Naive thymus-derived CD4-positive, alpha-beta T cell (primary cell): ENCODE measurements at regions of chr2 and their contacts with region 1.

Region 1: DNA sequence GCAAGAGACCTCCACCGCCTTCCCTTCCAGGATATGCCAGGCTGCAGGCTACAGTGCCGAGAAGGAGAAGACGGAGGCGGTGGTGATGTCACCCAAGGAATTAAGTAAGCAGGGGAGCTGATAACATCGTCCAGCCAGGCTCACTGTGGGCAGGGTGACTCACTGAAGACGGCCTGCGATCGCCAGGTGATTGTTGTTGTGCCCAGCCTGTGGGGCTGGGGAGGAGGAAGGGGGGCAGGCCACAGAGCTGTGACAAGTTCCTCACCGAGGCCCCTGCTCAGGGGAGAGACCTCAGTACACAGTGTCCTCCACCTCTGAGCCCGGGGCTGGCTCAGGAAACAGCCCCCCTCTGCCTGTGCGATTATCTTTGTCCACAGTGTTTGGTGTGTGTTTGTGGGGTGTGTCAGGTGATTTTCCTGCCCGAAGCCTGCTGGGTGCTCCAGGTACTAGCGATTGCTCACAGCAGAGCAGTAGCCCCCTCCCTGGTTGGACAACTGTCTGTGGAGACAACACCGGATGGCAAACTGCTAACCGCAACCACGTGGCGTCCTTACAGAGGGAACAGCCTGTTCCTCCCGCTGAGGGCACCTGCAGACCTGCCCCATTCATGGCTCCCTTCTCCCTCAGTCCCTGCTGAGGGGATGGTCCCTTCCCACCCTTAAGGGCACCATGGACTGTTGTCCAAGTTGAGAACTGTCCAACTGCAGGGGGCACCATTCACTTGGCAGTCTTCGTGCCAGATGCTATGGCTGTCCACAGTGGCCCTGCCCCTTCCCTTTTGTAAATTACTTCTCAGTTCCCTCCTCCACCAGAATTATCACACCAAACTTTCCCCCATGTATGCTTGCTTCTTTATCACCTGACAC is 95.1 kb downstream of the ZFP36L2 start:
- DNase-seq: peak; percentile 44 to 92 (median 82)
- ATAC-seq: peak; percentile 60
- H3K4me3 ChIP-seq: peak overlapping the region; percentile 51
- H3K4me3 Mint-ChIP-seq: peak overlapping the region; percentile 36 to 86 (median 68)
- H3K27ac ChIP-seq: peak overlapping the region; percentile 96
- H3K27ac Mint-ChIP-seq: peak overlapping the region; percentile 88 to 100 (median 98)
- H3K4me1 ChIP-seq: peaks cover 90 to 92% of the 10 kb centered on the region in 2 donors
- H3K4me1 Mint-ChIP-seq: peaks cover 67 to 89% (median 85%) of the 10 kb centered on the region in 7 donors
- H3K27me3 ChIP-seq: no peaks in the 10 kb centered on the region
- H3K27me3 Mint-ChIP-seq: no peaks in the 10 kb centered on the region

Region 2: GRCh38 chr2:41180387-41180786 is 1950.9 kb before region 1 on chr2:
- CTCF ChIA-PET with region 1: no interaction called
- POLR2A ChIA-PET with region 1: no interaction called
- intact Hi-C with region 1: no loop called
- DNase-seq: no peak
- ATAC-seq: no peak
- H3K4me3 ChIP-seq: no peak overlapping the region
- H3K4me3 Mint-ChIP-seq: no peak overlapping the region
- H3K27ac ChIP-seq: no peak overlapping the region
- H3K27ac Mint-ChIP-seq: no peak overlapping the region
- H3K4me1 ChIP-seq: no peaks in the 10 kb centered on the region
- H3K4me1 Mint-ChIP-seq: no peaks in the 10 kb centered on the region
- H3K27me3 ChIP-seq: no peaks in the 10 kb centered on the region
- H3K27me3 Mint-ChIP-seq: no peaks in the 10 kb centered on the region

Region 3: GRCh38 chr2:42906557-42907411 is 224.5 kb before region 1 on chr2:
- CTCF ChIA-PET with region 1: no interaction called
- POLR2A ChIA-PET with region 1: no interaction called
- intact Hi-C with region 1: no loop called
- DNase-seq: no peak
- ATAC-seq: peak; percentile 31
- H3K4me3 ChIP-seq: no peak overlapping the region
- H3K4me3 Mint-ChIP-seq: no peak overlapping the region
- H3K27ac ChIP-seq: no peak overlapping the region
- H3K27ac Mint-ChIP-seq: peak overlapping the region in 1 of 9 donors; percentile 55
- H3K4me1 ChIP-seq: no peaks in the 10 kb centered on the region
- H3K4me1 Mint-ChIP-seq: peaks cover 0 to 5% (median 0%) of the 10 kb centered on the region in 7 donors
- H3K27me3 ChIP-seq: no peaks in the 10 kb centered on the region
- H3K27me3 Mint-ChIP-seq: peaks cover 7 to 26% (median 16%) of the 10 kb centered on the region in 5 donors

Region 4: GRCh38 chr2:42944779-42945415 is 186.4 kb before region 1 on chr2:
- CTCF ChIA-PET with region 1: interaction called, 4 read pairs
- POLR2A ChIA-PET with region 1: interaction called, 4 read pairs
- intact Hi-C with region 1: loop called in 1 of 2 experiments (anchors 5 kb)
- DNase-seq: no peak
- ATAC-seq: no peak
- H3K4me3 ChIP-seq: no peak overlapping the region
- H3K4me3 Mint-ChIP-seq: no peak overlapping the region
- H3K27ac ChIP-seq: no peak overlapping the region
- H3K27ac Mint-ChIP-seq: no peak overlapping the region
- H3K4me1 ChIP-seq: no peaks in the 10 kb centered on the region
- H3K4me1 Mint-ChIP-seq: peaks cover 0 to 7% (median 5%) of the 10 kb centered on the region in 7 donors
- H3K27me3 ChIP-seq: no peaks in the 10 kb centered on the region
- H3K27me3 Mint-ChIP-seq: peaks cover 0 to 8% (median 0%) of the 10 kb centered on the region in 5 donors

Region 5: DNA sequence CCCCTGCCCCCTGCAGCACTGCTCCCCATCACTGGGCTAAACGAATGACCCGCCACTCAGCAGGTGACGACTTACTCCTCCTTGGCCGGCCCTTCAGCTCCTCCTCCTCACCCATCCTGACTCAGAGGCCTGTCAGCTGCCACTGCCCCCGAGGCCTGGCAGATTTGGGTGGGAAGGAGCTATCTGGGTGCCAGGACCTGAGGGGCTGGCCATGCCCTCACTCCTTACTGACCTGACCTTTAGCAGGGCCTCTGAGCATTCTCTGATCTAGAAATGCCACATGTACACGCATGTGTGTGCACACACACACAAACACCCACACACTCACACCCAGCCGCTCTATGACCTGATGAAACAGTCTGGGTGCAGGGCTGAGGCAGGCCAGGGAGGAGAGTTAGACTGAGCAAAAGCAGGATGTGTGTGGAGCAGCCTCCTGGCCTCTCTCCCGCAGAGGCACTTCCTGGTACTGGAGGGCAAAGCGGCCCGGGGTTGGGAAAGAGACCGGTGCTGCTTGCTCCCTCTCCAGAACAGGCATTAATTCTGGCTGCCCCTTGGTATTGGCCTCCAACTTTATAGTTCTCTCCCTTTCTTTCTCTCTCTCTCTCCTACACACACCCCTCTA is 27.1 kb after region 1 on chr2:
- CTCF ChIA-PET with region 1: interaction called, 6 read pairs
- POLR2A ChIA-PET with region 1: interaction called, 1,274 read pairs
- intact Hi-C with region 1: no loop called
- DNase-seq: peak in 3 of 9 donors; percentile 70 to 72 (median 71)
- ATAC-seq: peak; percentile 59
- H3K4me3 ChIP-seq: peak overlapping the region; percentile 18
- H3K4me3 Mint-ChIP-seq: peak overlapping the region; percentile 81 to 91 (median 86)
- H3K27ac ChIP-seq: peak overlapping the region; percentile 92
- H3K27ac Mint-ChIP-seq: peak overlapping the region; percentile 96 to 100 (median 99)
- H3K4me1 ChIP-seq: peaks cover 53 to 62% of the 10 kb centered on the region in 2 donors
- H3K4me1 Mint-ChIP-seq: peaks cover 47 to 95% (median 69%) of the 10 kb centered on the region in 7 donors
- H3K27me3 ChIP-seq: no peaks in the 10 kb centered on the region
- H3K27me3 Mint-ChIP-seq: no peaks in the 10 kb centered on the region

Region 6: GRCh38 chr2:43194121-43194869 is 63.0 kb after region 1 on chr2:
- CTCF ChIA-PET with region 1: interaction called, 11 read pairs
- POLR2A ChIA-PET with region 1: interaction called, 120 read pairs
- intact Hi-C with region 1: loop called in 1 of 2 experiments (anchors 1 kb)
- DNase-seq: no peak
- ATAC-seq: no peak
- H3K4me3 ChIP-seq: peak overlapping the region; percentile 80
- H3K4me3 Mint-ChIP-seq: peak overlapping the region; percentile 86 to 100 (median 92)
- H3K27ac ChIP-seq: peak overlapping the region; percentile 98
- H3K27ac Mint-ChIP-seq: peak overlapping the region; percentile 94 to 100 (median 99)
- H3K4me1 ChIP-seq: peaks cover 61 to 69% of the 10 kb centered on the region in 2 donors
- H3K4me1 Mint-ChIP-seq: peaks cover 37 to 75% (median 59%) of the 10 kb centered on the region in 7 donors
- H3K27me3 ChIP-seq: no peaks in the 10 kb centered on the region
- H3K27me3 Mint-ChIP-seq: no peaks in the 10 kb centered on the region

Region 7: DNA sequence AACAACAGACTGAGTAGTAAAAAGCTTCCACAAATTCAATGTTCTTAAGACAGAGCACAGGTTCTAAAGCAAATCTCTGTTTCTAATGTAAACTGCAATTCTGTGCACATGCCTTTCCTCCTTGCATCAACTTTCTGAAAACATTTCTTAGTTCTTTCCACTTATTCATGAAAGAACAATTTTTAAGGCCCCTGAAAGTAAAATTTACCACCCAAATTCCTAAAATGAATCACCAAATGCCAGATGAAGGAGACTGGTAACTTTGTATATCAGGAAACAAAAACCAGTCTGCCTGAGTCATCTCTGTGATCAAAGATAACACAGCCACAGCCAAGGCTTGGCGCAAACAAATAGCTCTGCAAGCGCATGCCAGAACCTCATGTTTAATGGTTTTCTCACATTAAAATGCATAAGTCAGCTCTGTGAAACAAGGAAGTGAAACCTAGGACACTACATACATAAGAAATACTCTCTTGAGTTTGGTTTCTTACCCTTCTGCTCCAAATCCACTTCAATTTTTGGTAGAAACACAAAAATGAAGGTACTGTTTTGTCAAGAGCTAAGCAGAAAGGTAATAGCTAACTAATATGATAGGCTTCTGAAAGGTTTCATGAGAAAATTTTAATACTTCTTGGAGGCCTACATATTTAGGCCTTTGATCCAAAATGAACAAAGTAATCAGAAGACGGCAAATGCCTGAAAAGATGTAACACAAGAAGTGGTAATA is 295.2 kb after region 1 on chr2:
- CTCF ChIA-PET with region 1: no interaction called
- POLR2A ChIA-PET with region 1: no interaction called
- intact Hi-C with region 1: loop called in 1 of 2 experiments (anchors 2 kb)
- DNase-seq: peak in 5 of 9 donors; percentile 4 to 56 (median 17)
- ATAC-seq: peak; percentile 94
- H3K4me3 ChIP-seq: no peak overlapping the region
- H3K4me3 Mint-ChIP-seq: peak overlapping the region in 4 of 10 donors; percentile 3 to 66 (median 5)
- H3K27ac ChIP-seq: no peak overlapping the region
- H3K27ac Mint-ChIP-seq: peak overlapping the region in 5 of 9 donors; percentile 0 to 89 (median 85)
- H3K4me1 ChIP-seq: peaks cover 0 to 35% of the 10 kb centered on the region in 2 donors
- H3K4me1 Mint-ChIP-seq: peaks cover 8 to 43% (median 30%) of the 10 kb centered on the region in 7 donors
- H3K27me3 ChIP-seq: no peaks in the 10 kb centered on the region
- H3K27me3 Mint-ChIP-seq: peaks cover 0 to 6% (median 0%) of the 10 kb centered on the region in 5 donors

Region 8: GRCh38 chr2:43495727-43496126 is 364.5 kb after region 1 on chr2:
- CTCF ChIA-PET with region 1: no interaction called
- POLR2A ChIA-PET with region 1: no interaction called
- intact Hi-C with region 1: no loop called
- DNase-seq: no peak
- ATAC-seq: no peak
- H3K4me3 ChIP-seq: no peak overlapping the region
- H3K4me3 Mint-ChIP-seq: no peak overlapping the region
- H3K27ac ChIP-seq: no peak overlapping the region
- H3K27ac Mint-ChIP-seq: no peak overlapping the region
- H3K4me1 ChIP-seq: no peaks in the 10 kb centered on the region
- H3K4me1 Mint-ChIP-seq: peaks cover 0 to 6% (median 0%) of the 10 kb centered on the region in 7 donors
- H3K27me3 ChIP-seq: no peaks in the 10 kb centered on the region
- H3K27me3 Mint-ChIP-seq: no peaks in the 10 kb centered on the region

Region 9: DNA sequence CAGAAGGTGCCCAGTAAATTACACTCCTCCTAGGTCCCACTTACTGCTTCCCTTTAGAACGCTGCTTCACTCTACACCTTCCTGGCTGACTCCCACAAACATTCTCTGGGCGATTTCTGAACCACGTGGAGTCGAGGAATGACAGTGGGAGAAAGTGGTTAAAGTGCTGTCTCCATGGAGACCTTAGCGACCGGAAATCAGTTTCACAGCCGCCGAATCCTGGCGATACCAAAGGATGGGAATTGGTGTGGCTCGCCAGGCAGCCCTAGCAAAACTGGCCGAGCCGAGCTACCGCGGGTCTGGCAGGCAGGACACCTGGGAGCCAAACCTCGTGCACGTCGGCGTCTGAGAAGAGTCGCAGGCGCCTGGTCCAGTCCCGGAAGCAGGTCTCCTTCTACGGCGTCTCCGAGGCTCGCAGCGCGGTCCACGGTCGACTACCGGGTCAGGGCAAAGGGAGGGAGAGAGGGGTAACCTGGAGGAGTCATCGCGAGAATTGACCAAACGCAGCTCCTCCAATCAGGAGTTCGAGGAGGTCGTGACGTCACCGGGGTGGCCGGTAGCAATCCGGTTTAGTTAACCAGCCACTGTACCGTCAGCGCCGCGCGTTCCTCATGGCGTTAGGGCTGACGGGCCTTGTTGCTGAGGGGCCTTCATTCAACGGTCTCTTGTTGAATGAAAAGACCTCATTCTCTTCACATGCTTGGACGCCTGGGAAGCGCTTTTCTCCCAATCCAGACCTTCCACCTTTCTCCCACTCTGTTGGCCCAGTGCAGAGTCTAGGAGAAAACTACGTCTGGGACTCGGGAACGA is 464.6 kb after region 1 on chr2 and contains the start of gene THADA:
- CTCF ChIA-PET with region 1: no interaction called
- POLR2A ChIA-PET with region 1: no interaction called
- intact Hi-C with region 1: loop called (anchors 5 to 10 kb)
- DNase-seq: peak; percentile 83 to 94 (median 91)
- ATAC-seq: peak; percentile 98
- H3K4me3 ChIP-seq: peak within 1 kb of the TSS; percentile 79
- H3K4me3 Mint-ChIP-seq: peak within 1 kb of the TSS; percentile 82 to 96 (median 94)
- H3K27ac ChIP-seq: peak within 1 kb of the TSS; percentile 87
- H3K27ac Mint-ChIP-seq: peak within 1 kb of the TSS; percentile 90 to 98 (median 97)
- H3K4me1 ChIP-seq: peaks cover 9 to 13% of the 10 kb centered on the region in 2 donors
- H3K4me1 Mint-ChIP-seq: peaks cover 23 to 48% (median 38%) of the 10 kb centered on the region in 7 donors
- H3K27me3 ChIP-seq: no peaks in the 10 kb centered on the region
- H3K27me3 Mint-ChIP-seq: peaks cover 0 to 6% (median 3%) of the 10 kb centered on the region in 5 donors
- total RNA-seq, gene THADA: 34.1 to 43.0 (median 41.0) TPM